Activated CD8-positive, alpha-beta memory T cell treated with anti-CD3 and anti-CD28 coated beads, Interleukin-2, amount 10 ng/mL, durations not matched to agents 7 days and 5 days (primary cell): ENCODE measurements at regions of chr17 and their contacts with region 1.

Region 1: DNA sequence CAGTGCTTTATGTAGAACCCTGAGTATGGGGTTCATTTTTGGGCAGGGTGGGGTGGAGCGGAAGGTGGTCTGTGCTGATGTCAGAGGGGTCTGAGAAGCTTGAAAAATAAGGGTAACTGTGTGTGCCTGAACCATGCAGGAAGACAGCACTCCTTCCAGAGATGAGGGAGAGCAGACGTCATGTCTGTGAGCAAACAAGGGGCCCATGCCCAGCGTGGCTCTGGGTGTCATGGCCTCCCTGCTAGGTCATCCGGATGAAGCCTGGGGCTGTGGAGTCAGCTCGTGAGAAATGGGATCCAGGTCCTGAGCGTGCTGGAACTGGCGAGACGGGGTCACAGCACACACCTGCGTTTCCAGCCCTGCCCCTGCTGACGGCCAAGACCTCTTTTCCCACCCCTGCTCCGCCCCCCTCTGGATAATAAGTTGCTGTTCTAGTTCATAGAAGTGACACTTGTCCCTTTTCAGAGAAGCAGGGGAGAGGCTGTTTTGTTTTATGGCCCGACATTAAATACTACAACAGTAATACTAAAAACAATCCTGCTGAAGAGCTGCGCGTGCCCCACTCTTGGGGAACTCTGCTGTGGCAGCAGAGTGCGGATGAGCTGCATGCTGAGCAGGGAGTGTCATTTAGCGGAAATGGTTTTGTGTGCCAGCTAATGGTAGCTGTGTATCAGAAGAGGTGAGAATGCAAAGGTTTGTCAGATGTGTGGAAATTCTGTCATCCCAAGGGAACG is 92.6 kb downstream of the RPTOR start:
- DNase-seq: no peak
- ATAC-seq: peak; percentile 23
- H3K4me3 Mint-ChIP-seq: peak overlapping the region; percentile 10
- H3K27ac Mint-ChIP-seq: peak overlapping the region; percentile 59
- H3K4me1 Mint-ChIP-seq: peaks cover 4% of the 10 kb centered on the region
- H3K27me3 Mint-ChIP-seq: no peaks in the 10 kb centered on the region

Region 2: DNA sequence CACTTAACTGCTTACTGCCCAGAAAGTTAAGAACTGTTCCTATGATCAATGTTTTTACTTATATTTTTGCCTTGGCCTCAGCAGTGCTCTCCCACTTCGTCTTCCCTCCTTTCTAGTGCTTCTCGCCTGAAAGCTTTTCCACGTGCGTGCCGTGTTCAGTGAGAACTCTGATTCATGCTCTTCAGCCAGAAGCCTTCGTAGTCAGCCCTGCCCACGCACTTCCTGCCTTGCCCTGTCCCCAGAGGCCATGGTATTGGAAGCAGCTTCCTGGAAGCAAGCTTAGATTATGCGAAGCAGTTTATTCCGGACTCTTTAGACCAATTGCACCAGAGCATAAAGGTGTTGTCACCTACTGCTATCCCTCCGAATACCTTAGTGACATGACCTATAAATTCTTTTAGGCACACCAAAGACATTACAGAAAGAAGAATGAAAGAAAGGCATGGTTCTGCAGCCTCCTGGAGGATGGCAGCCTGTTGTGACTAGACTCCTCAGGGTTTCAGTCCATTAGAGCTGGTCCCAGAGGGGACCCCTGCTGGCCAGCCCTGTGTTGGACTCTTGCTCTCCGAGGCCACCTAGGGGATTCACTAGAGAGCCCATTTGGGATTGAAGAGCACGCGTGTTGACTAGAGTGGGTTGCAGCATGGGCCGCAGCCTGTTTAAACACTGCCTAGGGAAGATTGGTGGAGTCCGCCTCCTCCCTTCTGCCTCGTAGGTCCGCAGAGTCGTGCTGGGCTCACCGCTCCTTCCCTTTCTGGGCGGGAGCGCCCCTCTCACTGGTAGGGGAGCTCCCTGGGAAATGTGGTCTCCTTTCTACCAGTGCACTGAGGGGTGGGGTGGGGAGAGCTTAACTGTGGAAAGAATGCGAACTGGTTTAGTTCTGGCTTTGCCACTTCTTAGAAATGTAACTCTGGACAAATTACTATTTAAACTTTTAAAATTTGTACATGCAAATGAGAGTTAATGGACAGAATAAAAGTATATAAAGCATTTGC is 12.8 kb after region 1 on chr17:
- CTCF ChIA-PET with region 1: interaction called, 13 read pairs
- DNase-seq: peak; percentile 78
- ATAC-seq: peak; percentile 93
- H3K4me3 Mint-ChIP-seq: peak overlapping the region; percentile 2
- H3K27ac Mint-ChIP-seq: peak overlapping the region; percentile 81
- H3K4me1 Mint-ChIP-seq: peaks cover 46% of the 10 kb centered on the region
- H3K27me3 Mint-ChIP-seq: no peaks in the 10 kb centered on the region

Region 3: GRCh38 chr17:80795754-80796153 is 158.5 kb after region 1 on chr17:
- CTCF ChIA-PET with region 1: no interaction called
- DNase-seq: no peak
- ATAC-seq: no peak
- H3K4me3 Mint-ChIP-seq: no peak overlapping the region
- H3K27ac Mint-ChIP-seq: peak overlapping the region; percentile 10
- H3K4me1 Mint-ChIP-seq: peaks cover 32% of the 10 kb centered on the region
- H3K27me3 Mint-ChIP-seq: no peaks in the 10 kb centered on the region